Activated naive CD4-positive, alpha-beta T cell treated with anti-CD3 and anti-CD28 coated beads, Interleukin-2, amount 10 ng/mL, durations not matched to agents 7 days and 5 days (primary cell): ENCODE measurements at regions of chr17 and their contacts with region 1.

Region 1: GRCh38 chr17:16449121-16449570 is 33.8 kb downstream of the TRPV2 start:
- DNase-seq: no peak
- H3K4me3 Mint-ChIP-seq: no peak overlapping the region
- H3K27ac Mint-ChIP-seq: no peak overlapping the region
- H3K4me1 Mint-ChIP-seq: peaks cover 14% of the 10 kb centered on the region
- H3K27me3 Mint-ChIP-seq: no peaks in the 10 kb centered on the region

Region 2: DNA sequence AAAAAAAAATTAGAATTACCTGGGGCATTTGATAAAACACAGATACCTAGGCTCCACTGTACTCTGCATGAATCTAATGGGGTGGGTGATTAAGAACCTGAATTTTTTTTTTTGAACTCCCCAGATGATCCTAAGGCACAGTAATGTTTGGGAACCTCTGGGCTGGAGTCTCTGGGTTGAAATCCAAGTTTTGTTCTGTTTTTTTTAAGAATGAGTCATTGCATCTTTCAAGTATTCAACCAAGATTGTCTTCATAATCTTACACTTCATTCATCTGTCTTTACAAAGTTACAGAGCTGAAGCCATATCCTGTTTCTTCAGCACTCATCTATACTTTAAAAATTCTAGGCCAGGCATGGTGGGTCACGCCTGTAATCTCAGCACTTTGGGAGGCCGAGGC is 179.5 kb before region 1 on chr17:
- CTCF ChIA-PET with region 1: no interaction called
- DNase-seq: no peak
- H3K4me3 Mint-ChIP-seq: no peak overlapping the region
- H3K27ac Mint-ChIP-seq: peak overlapping the region; percentile 82
- H3K4me1 Mint-ChIP-seq: peaks cover 28% of the 10 kb centered on the region
- H3K27me3 Mint-ChIP-seq: no peaks in the 10 kb centered on the region

Region 3: GRCh38 chr17:16285957-16286640 is 163.0 kb before region 1 on chr17:
- CTCF ChIA-PET with region 1: no interaction called
- DNase-seq: peak; percentile 87
- H3K4me3 Mint-ChIP-seq: peak overlapping the region; percentile 66
- H3K27ac Mint-ChIP-seq: peak overlapping the region; percentile 98
- H3K4me1 Mint-ChIP-seq: peaks cover 55% of the 10 kb centered on the region
- H3K27me3 Mint-ChIP-seq: no peaks in the 10 kb centered on the region

Region 4: GRCh38 chr17:16463358-16464302 is 14.5 kb after region 1 on chr17:
- CTCF ChIA-PET with region 1: interaction called, 10 read pairs
- DNase-seq: no peak
- H3K4me3 Mint-ChIP-seq: no peak overlapping the region
- H3K27ac Mint-ChIP-seq: no peak overlapping the region
- H3K4me1 Mint-ChIP-seq: no peaks in the 10 kb centered on the region
- H3K27me3 Mint-ChIP-seq: no peaks in the 10 kb centered on the region

Region 5: GRCh38 chr17:16521070-16521727 is 72.1 kb after region 1 on chr17:
- CTCF ChIA-PET with region 1: interaction called, 79 read pairs
- DNase-seq: peak; percentile 77
- H3K4me3 Mint-ChIP-seq: no peak overlapping the region
- H3K27ac Mint-ChIP-seq: no peak overlapping the region
- H3K4me1 Mint-ChIP-seq: peaks cover 5% of the 10 kb centered on the region
- H3K27me3 Mint-ChIP-seq: peaks cover 32% of the 10 kb centered on the region